WTC11 (cell line): ENCODE measurements at regions of chr18 and their contacts with region 1.

Region 1: GRCh38 chr18:51110073-51110803 is 80.2 kb downstream of the SMAD4 start:
- DNase-seq: peak; percentile 89
- ATAC-seq: peak; percentile 98
- H3K4me3 Mint-ChIP-seq: no peak overlapping the region
- H3K27ac Mint-ChIP-seq: no peak overlapping the region
- H3K4me1 Mint-ChIP-seq: no peaks in the 10 kb centered on the region
- H3K27me3 Mint-ChIP-seq: peaks cover 3% of the 10 kb centered on the region; the same call in 1 of the 2 replicates
- CTCF ChIP-seq: peak; percentile 98

Region 2: GRCh38 chr18:51039138-51040112 is 70.8 kb before region 1 on chr18:
- CTCF ChIA-PET with region 1: no interaction called
- POLR2A ChIA-PET with region 1: no interaction called
- DNase-seq: peak; percentile 30
- ATAC-seq: peak; percentile 75
- H3K4me3 Mint-ChIP-seq: no peak overlapping the region
- H3K27ac Mint-ChIP-seq: peak overlapping the region; percentile 91
- H3K4me1 Mint-ChIP-seq: peaks cover 81% of the 10 kb centered on the region
- H3K27me3 Mint-ChIP-seq: no peaks in the 10 kb centered on the region
- CTCF ChIP-seq: no peak

Region 3: GRCh38 chr18:51123936-51124486 is 13.8 kb after region 1 on chr18:
- CTCF ChIA-PET with region 1: interaction called, 13 read pairs
- POLR2A ChIA-PET with region 1: no interaction called
- DNase-seq: no peak
- ATAC-seq: no peak
- H3K4me3 Mint-ChIP-seq: no peak overlapping the region
- H3K27ac Mint-ChIP-seq: no peak overlapping the region
- H3K4me1 Mint-ChIP-seq: peaks cover 14% of the 10 kb centered on the region
- H3K27me3 Mint-ChIP-seq: no peaks in the 10 kb centered on the region; the same call in 1 of the 2 replicates
- CTCF ChIP-seq: no peak

Region 4: DNA sequence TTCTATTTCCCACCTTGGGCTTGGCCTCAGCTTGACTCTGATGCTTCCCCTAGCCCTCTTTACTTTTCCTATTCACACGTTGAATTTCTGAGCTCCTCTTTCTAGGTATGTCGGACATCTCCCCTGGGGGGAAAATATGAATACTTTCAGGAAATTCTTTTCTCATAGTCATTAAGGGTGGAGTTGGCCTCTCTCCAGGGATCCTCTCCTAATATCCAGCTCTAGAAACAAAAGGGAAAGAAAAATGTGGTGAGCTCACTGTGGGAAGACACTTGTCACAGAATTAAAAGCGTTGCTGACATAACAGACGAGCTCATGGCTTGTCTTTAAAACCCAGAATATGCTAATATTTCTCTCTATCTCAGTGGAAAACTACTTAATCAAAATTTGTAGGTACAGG is 219.9 kb after region 1 on chr18:
- CTCF ChIA-PET with region 1: no interaction called
- POLR2A ChIA-PET with region 1: no interaction called
- DNase-seq: no peak
- ATAC-seq: no peak
- H3K4me3 Mint-ChIP-seq: no peak overlapping the region
- H3K27ac Mint-ChIP-seq: no peak overlapping the region
- H3K4me1 Mint-ChIP-seq: peaks cover 11% of the 10 kb centered on the region
- H3K27me3 Mint-ChIP-seq: no peaks in the 10 kb centered on the region
- CTCF ChIP-seq: no peak